Esophagus muscularis mucosa (tissue), 4 donors: ENCODE measurements at regions of chr1 and their contacts with region 1.

Region 1: DNA sequence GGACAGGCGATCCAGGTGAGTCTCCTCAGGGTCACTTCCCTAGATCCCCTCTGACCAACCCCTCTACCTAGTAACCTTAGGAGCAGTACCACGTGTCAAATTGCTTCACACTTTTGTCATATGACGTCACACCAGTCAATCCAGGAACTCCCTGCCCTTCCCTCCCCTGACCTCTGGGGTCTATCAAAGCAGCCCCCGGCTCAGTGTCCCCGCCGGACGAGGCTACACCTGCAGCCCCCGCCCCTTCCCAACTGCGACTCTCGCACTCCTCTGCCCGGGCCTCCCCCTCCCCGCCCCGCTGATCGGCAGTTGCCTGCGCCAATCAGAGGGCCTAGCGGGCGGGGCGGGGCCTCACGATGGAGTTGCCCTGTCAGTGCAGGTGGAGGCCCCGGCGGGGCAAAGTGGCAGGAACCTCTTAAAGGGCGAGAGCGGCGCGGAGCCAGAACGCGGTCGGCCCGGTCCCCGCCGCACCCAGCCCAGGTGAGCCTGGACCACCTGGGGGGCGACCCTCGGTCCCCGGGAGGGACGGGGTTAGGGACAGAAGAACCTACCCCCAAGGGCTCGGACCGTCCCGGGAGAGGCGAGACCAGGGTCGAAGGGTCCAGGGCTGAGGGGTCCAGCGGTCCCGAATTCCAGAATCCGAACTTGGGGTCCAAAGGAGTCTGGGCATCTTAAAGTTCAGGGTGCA is 27.5 kb upstream of the EPB41 start:
- DNase-seq: peak; percentile 95
- H3K4me3 ChIP-seq: peak overlapping the region; percentile 78 to 95 (median 87)
- H3K27ac ChIP-seq: peak overlapping the region; percentile 76 to 77 (median 77)
- H3K4me1 ChIP-seq: peaks cover 19 to 63% (median 46%) of the 10 kb centered on the region in 4 donors
- H3K27me3 ChIP-seq: no peaks in the 10 kb centered on the region
- CTCF ChIP-seq: no peak
- EP300 ChIP-seq: no peak
- POLR2A ChIP-seq: no peak

Region 2: GRCh38 chr1:28642847-28643635 is 243.8 kb before region 1 on chr1 and contains the start of gene TAF12:
- intact Hi-C with region 1: loop called (anchors 10 kb)
- DNase-seq: peak; percentile 96
- H3K4me3 ChIP-seq: peak within 1 kb of the TSS; percentile 77 to 89 (median 82)
- H3K27ac ChIP-seq: peak within 1 kb of the TSS; percentile 83 to 94 (median 88)
- H3K4me1 ChIP-seq: peaks cover 30 to 60% (median 43%) of the 10 kb centered on the region in 4 donors
- H3K27me3 ChIP-seq: no peaks in the 10 kb centered on the region
- CTCF ChIP-seq: peak; percentile 35 to 51 (median 36)
- EP300 ChIP-seq: no peak
- POLR2A ChIP-seq: peak; percentile 87
- total RNA-seq, gene TAF12: 16.1 to 17.6 (median 17.1) TPM

Region 3: GRCh38 chr1:29033829-29034466 is 147.1 kb after region 1 on chr1:
- intact Hi-C with region 1: loop called (anchors 2 kb)
- DNase-seq: no peak
- H3K4me3 ChIP-seq: no peak overlapping the region
- H3K27ac ChIP-seq: no peak overlapping the region
- H3K4me1 ChIP-seq: peaks cover 0 to 8% (median 3%) of the 10 kb centered on the region in 4 donors
- H3K27me3 ChIP-seq: no peaks in the 10 kb centered on the region
- CTCF ChIP-seq: peak; percentile 62 to 78 (median 68)
- EP300 ChIP-seq: no peak
- POLR2A ChIP-seq: no peak

Region 4: GRCh38 chr1:29083317-29084195 is 196.7 kb after region 1 on chr1:
- intact Hi-C with region 1: no loop called
- DNase-seq: no peak
- H3K4me3 ChIP-seq: no peak overlapping the region
- H3K27ac ChIP-seq: no peak overlapping the region
- H3K4me1 ChIP-seq: no peaks in the 10 kb centered on the region
- H3K27me3 ChIP-seq: no peaks in the 10 kb centered on the region
- CTCF ChIP-seq: no peak
- EP300 ChIP-seq: no peak
- POLR2A ChIP-seq: no peak

Region 5: GRCh38 chr1:29124366-29125236 is 237.7 kb after region 1 on chr1:
- intact Hi-C with region 1: loop called (anchors 5 kb)
- DNase-seq: peak; percentile 96
- H3K4me3 ChIP-seq: peak overlapping the region; percentile 61 to 83 (median 71)
- H3K27ac ChIP-seq: peak overlapping the region; percentile 98 to 100 (median 98)
- H3K4me1 ChIP-seq: peaks cover 27 to 58% (median 51%) of the 10 kb centered on the region in 4 donors
- H3K27me3 ChIP-seq: peaks cover 0 to 7% (median 3%) of the 10 kb centered on the region in 4 donors
- CTCF ChIP-seq: peak; percentile 89 to 90 (median 90)
- EP300 ChIP-seq: no peak
- POLR2A ChIP-seq: peak; percentile 51

Region 6: GRCh38 chr1:29202584-29203340 is 315.9 kb after region 1 on chr1:
- intact Hi-C with region 1: loop called (anchors 1 kb)
- DNase-seq: peak; percentile 99
- H3K4me3 ChIP-seq: no peak overlapping the region
- H3K27ac ChIP-seq: peak overlapping the region; percentile 74 to 83 (median 80)
- H3K4me1 ChIP-seq: peaks cover 7 to 11% (median 10%) of the 10 kb centered on the region in 4 donors
- H3K27me3 ChIP-seq: no peaks in the 10 kb centered on the region
- CTCF ChIP-seq: peak; percentile 95 to 97 (median 95)
- EP300 ChIP-seq: no peak
- POLR2A ChIP-seq: no peak

Region 7: DNA sequence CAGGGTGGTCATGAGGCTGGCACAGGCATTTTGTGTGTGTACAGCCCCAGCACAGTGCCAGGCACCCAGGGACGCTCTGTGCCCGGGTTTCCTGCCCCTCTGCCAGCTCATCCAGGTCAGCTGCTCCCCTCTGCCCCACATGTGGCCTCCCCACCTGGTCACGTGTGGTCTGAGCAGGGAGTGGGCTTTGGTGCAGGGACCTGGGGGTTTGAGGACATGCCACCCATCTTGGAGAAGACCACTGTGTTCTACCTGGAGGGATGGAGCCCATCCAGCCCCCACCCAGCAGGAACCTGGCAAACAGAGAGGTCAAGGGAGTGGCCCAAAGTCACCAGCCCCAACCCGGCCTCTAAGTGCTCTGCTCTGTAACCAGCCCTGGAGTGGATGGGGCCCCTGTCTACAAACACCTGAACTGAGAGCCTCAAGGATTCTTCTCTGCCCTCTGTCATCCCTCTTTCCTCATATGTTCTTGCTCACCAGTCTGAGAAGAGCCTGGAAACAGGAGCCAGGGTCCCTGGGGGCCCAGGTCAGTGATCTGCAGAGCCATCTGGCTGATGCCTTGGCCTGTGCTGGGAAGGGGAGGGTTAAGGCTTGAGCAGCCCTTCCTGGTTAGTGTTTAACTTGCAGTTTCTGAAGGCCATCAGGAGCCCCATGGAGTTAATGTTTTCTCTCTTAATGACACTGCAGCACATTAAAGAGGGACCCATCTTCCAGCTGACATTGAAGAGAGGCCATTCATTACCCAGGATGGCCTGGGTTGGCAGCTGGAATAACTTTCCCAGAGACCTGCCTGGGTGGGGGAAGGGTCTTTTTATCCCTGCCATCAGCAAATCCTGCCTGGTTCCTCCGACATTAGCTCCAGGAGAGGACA is 584.8 kb after region 1 on chr1:
- intact Hi-C with region 1: no loop called
- DNase-seq: no peak
- H3K4me3 ChIP-seq: no peak overlapping the region
- H3K27ac ChIP-seq: no peak overlapping the region
- H3K4me1 ChIP-seq: peaks cover 0 to 9% (median 2%) of the 10 kb centered on the region in 4 donors
- H3K27me3 ChIP-seq: peaks cover 0 to 68% (median 0%) of the 10 kb centered on the region in 4 donors
- CTCF ChIP-seq: no peak
- EP300 ChIP-seq: no peak
- POLR2A ChIP-seq: no peak